Naive thymus-derived CD8-positive, alpha-beta T cell (primary cell): ENCODE measurements at regions of chr1 and their contacts with region 1.

Region 1: DNA sequence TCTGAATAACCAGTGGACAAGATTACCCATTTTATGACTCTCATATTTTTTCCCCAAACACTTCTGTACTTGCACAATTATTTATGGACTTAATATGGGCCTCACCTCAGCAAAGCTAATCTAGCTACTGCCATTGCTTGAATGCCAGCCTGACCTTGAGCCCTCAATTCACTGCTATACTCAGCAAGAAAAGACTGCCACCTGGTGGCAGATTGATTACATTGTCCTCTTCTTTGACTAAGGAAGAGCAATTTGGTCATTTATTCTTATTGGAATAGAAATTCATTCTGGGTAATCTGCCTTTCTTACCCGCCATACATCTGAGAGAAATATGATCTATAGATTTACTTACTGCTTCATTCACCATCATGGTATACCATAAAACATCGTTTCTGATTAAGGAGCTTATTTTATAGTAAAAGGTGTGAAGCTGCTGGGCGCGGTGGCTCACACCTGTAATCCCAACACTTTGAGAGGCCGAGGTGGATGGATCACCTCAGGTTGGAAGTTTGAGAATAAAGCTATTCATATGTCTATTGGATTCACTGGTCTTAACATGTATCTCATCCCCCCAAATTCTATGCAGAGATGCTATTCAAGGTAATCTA is 32.9 kb upstream of the DIPK1A start:
- DNase-seq: peak; percentile 41 to 90 (median 76)
- ATAC-seq: peak; percentile 88 to 95
- H3K4me3 Mint-ChIP-seq: no peak overlapping the region
- H3K27ac Mint-ChIP-seq: peak overlapping the region in 9 of 10 donors; percentile 9 to 90 (median 79)
- H3K4me1 Mint-ChIP-seq: peaks cover 19 to 49% (median 46%) of the 10 kb centered on the region in 4 donors
- H3K27me3 Mint-ChIP-seq: no peaks in the 10 kb centered on the region

Region 2: GRCh38 chr1:92858564-92859399 is 135.4 kb before region 1 on chr1:
- POLR2A ChIA-PET with region 1: interaction called, 16 read pairs
- DNase-seq: peak in 9 of 10 donors; percentile 33 to 84 (median 62)
- ATAC-seq: peak; percentile 90 to 92
- H3K4me3 Mint-ChIP-seq: peak overlapping the region; percentile 49 to 77 (median 62)
- H3K27ac Mint-ChIP-seq: peak overlapping the region; percentile 3 to 93 (median 56)
- H3K4me1 Mint-ChIP-seq: peaks cover 3 to 20% (median 15%) of the 10 kb centered on the region in 4 donors
- H3K27me3 Mint-ChIP-seq: no peaks in the 10 kb centered on the region

Region 3: GRCh38 chr1:92968138-92969032 is 25.8 kb before region 1 on chr1:
- POLR2A ChIA-PET with region 1: interaction called, 51 read pairs
- DNase-seq: peak in 4 of 10 donors; percentile 26 to 52 (median 45)
- ATAC-seq: peak; percentile 28 to 39
- H3K4me3 Mint-ChIP-seq: no peak overlapping the region
- H3K27ac Mint-ChIP-seq: peak overlapping the region in 8 of 10 donors; percentile 11 to 79 (median 38)
- H3K4me1 Mint-ChIP-seq: peaks cover 13 to 36% (median 23%) of the 10 kb centered on the region in 4 donors
- H3K27me3 Mint-ChIP-seq: no peaks in the 10 kb centered on the region

Region 4: GRCh38 chr1:92980732-92981647 is 13.2 kb before region 1 on chr1:
- POLR2A ChIA-PET with region 1: interaction called, 22 read pairs
- DNase-seq: peak in 8 of 10 donors; percentile 60 to 90 (median 82)
- ATAC-seq: peak; percentile 95
- H3K4me3 Mint-ChIP-seq: peak overlapping the region; percentile 48 to 81 (median 62)
- H3K27ac Mint-ChIP-seq: peak overlapping the region; percentile 93 to 99 (median 97)
- H3K4me1 Mint-ChIP-seq: peaks cover 5 to 49% (median 21%) of the 10 kb centered on the region in 4 donors
- H3K27me3 Mint-ChIP-seq: no peaks in the 10 kb centered on the region